ENCODE measurements at regions of chr4 and their contacts with region 1.

Region 1: DNA sequence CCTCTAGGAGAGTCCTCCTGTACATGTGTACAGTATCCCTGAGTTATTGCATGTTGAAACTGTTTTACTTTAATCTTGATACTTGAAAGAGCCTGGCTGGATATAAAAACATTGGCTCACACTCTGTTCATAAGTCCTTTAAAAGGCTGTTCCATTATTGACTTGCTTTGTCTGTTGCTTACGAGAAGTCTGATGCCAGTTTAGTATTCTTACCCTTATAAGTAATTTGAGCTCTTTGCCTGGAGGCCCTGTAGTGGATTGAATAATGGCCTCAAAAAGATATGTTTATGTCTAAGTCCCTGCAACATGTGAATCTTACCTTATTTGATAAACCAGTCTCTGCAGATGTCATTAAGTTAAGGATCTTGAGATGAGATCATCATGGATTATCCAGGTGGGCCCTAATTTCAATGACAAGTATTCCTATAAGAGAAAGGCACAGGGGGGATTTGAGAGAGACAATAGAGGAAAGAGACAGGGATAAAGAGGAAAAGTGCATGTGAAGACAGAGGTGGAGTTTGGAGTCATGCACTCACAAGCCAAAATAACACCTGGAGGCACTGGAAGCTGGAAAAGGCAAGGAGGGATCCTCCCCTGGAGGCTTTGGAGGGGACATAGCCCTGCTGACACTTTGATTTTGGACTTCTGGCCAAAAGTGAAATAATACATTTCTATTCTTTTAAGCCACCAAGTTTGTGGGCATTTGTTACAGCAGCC is 98.1 kb downstream of the IRF2 start:
- DNase-seq: no peak
- ATAC-seq: no peak
- H3K4me3 ChIP-seq: no peak overlapping the region
- H3K27ac ChIP-seq: no peak overlapping the region
- H3K4me1 ChIP-seq: no peaks in the 10 kb centered on the region
- H3K27me3 ChIP-seq: no peaks in the 10 kb centered on the region
- CTCF ChIP-seq: no peak
- POLR2A ChIP-seq: no peak
- RAD21 ChIP-seq: no peak

Region 2: DNA sequence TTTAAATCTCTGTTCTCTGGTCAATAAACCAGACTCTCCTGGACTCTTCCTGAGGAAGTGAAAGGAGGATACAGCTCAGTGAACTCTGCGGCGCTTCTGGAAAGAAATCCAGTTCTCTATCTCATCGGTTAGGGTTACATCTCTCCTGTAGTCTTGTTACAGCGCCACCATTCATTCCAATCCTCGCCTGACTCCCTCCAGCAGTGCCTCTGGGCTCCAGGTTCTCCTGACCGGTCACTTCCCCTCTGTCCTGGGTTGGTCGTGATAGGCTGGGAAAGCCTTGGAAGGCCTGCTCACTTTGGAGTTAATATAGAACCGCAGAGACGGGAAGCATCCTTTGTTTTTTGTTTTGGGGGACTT is 568.2 kb before region 1 on chr4:
- CTCF ChIA-PET with region 1: no interaction called
- POLR2A ChIA-PET with region 1: no interaction called
- dilution Hi-C with region 1: no loop called
- in situ Hi-C with region 1: no loop called
- intact Hi-C with region 1: no loop called
- DNase-seq: no peak
- ATAC-seq: no peak
- H3K4me3 ChIP-seq: no peak overlapping the region
- H3K27ac ChIP-seq: no peak overlapping the region
- H3K4me1 ChIP-seq: no peaks in the 10 kb centered on the region
- H3K27me3 ChIP-seq: peaks cover 10% of the 10 kb centered on the region; the same call in 1 of the 2 replicates
- CTCF ChIP-seq: no peak
- POLR2A ChIP-seq: no peak
- RAD21 ChIP-seq: no peak

Region 3: GRCh38 chr4:184359888-184360287 is 16.4 kb before region 1 on chr4:
- CTCF ChIA-PET with region 1: no interaction called
- POLR2A ChIA-PET with region 1: no interaction called
- dilution Hi-C with region 1: no loop called
- in situ Hi-C with region 1: no loop called
- intact Hi-C with region 1: loop called (anchors 2 kb)
- DNase-seq: no peak
- ATAC-seq: 0 out of 2 replicates have a peak, but pooled peaks have one; percentile 12
- H3K4me3 ChIP-seq: no peak overlapping the region
- H3K27ac ChIP-seq: no peak overlapping the region
- H3K4me1 ChIP-seq: peaks cover 8% of the 10 kb centered on the region
- H3K27me3 ChIP-seq: no peaks in the 10 kb centered on the region
- CTCF ChIP-seq: no peak
- POLR2A ChIP-seq: no peak
- RAD21 ChIP-seq: no peak

Region 4: DNA sequence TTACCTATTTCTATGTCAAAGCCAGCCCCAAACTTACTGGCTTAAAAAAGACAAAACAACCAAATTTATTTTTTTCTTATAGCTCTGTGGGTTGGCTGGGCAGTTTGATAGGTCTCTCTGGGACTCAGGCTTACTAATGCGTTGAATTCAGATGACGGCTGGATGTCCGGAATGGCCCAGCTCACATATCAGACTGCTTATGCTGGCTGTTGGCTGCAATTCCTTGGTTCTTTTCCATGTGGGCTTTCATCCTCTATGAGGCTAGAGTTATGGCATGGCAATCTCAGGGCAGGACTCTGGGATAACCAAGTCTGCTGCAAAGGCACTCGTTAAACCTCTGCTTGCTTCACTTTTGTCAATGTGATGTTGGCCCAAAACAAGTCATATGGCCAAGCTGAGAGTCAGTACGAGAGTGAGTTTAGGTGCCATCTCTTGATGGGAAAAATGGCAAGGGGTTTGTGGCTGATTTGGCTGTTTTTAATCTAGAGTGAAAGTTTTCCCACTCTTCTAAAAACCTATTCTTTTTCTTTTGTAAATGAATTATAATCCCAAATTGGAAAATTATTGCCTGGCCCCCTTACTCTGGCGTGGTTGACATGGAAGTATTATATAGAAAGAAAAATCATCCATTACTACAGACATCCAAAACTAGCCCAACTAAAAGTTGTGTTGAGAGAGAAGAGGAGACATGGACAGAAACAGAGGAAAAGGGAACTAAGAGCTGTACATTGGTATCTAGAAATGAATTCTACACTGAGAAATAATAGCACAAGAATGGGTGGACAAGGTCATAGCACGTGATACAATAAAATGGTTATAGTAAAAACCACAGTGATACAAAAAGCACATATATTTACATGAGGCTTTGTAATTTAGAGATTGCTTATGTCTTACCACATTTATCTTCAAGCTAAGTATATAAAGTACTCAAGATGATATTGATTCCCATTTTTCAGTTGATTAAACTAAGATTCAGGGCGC is 279.9 kb after region 1 on chr4:
- CTCF ChIA-PET with region 1: no interaction called
- POLR2A ChIA-PET with region 1: no interaction called
- dilution Hi-C with region 1: no loop called
- in situ Hi-C with region 1: no loop called
- intact Hi-C with region 1: no loop called
- DNase-seq: no peak
- ATAC-seq: no peak
- H3K4me3 ChIP-seq: no peak overlapping the region
- H3K27ac ChIP-seq: no peak overlapping the region
- H3K4me1 ChIP-seq: peaks cover 3% of the 10 kb centered on the region
- H3K27me3 ChIP-seq: no peaks in the 10 kb centered on the region
- CTCF ChIP-seq: no peak
- POLR2A ChIP-seq: no peak
- RAD21 ChIP-seq: no peak

Measured in IMR-90 (cell line).